SK-N-SH (cell line): ENCODE measurements at regions of chr11 and their contacts with region 1.

Region 1: DNA sequence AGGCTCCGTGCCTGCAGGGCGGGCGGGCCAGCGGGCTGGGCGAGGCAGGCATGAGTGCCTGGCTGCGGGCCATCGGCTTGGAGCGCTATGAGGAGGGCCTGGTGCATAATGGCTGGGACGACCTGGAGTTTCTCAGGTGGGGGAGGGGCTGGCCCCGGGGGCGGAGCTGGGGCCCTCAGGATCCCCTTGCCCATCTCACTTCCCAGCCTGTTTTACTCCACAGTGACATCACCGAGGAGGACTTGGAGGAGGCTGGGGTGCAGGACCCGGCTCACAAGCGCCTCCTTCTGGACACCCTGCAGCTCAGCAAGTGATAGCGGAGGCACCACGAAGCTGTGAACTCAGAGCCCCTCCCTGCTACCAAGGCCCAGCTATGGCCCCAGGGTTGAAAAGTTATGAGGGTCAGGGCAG is 5.9 kb downstream of the PHOX2A start:
- DNase-seq: peak; percentile 87
- H3K4me3 ChIP-seq: peak overlapping the region; percentile 30 to 83; a peak in 2 of 4 replicates
- H3K27ac ChIP-seq: peak overlapping the region; percentile 64 to 90
- H3K4me1 ChIP-seq: peaks cover 17 to 27% of the 10 kb centered on the region in 2 experiments; a peak in 2 of 4 replicates
- H3K27me3 ChIP-seq: no peaks in the 10 kb centered on the region
- CTCF ChIP-seq: peak; percentile 91
- EP300 ChIP-seq: no peak
- RAD21 ChIP-seq: peak; percentile 56

Region 2: GRCh38 chr11:72041442-72042385 is 196.3 kb before region 1 on chr11:
- CTCF ChIA-PET with region 1: no interaction called
- POLR2A ChIA-PET with region 1: no interaction called
- DNase-seq: peak; percentile 77
- H3K4me3 ChIP-seq: peak overlapping the region; percentile 64 to 67
- H3K27ac ChIP-seq: peak overlapping the region; percentile 97 to 99
- H3K4me1 ChIP-seq: peaks cover 18 to 43% of the 10 kb centered on the region in 2 experiments
- H3K27me3 ChIP-seq: no peaks in the 10 kb centered on the region
- CTCF ChIP-seq: no peak
- EP300 ChIP-seq: peak in 1 of 2 experiments; percentile 58; a peak in 2 of 4 replicates
- RAD21 ChIP-seq: peak; percentile 15; the same call in 1 of the 2 replicates

Region 3: GRCh38 chr11:72222907-72223614 is 15.0 kb before region 1 on chr11:
- CTCF ChIA-PET with region 1: interaction called, 37 read pairs
- POLR2A ChIA-PET with region 1: interaction called, 131 read pairs
- DNase-seq: peak; percentile 92
- H3K4me3 ChIP-seq: peak overlapping the region; percentile 96 to 100
- H3K27ac ChIP-seq: peak overlapping the region; percentile 90 to 91
- H3K4me1 ChIP-seq: peaks cover 5 to 31% of the 10 kb centered on the region in 2 experiments; a peak in 3 of 4 replicates
- H3K27me3 ChIP-seq: no peaks in the 10 kb centered on the region
- CTCF ChIP-seq: no peak
- EP300 ChIP-seq: peak in 1 of 2 experiments; percentile 41; a peak in 1 of 4 replicates
- RAD21 ChIP-seq: no peak

Region 4: GRCh38 chr11:72308226-72309073 is 70.4 kb after region 1 on chr11:
- CTCF ChIA-PET with region 1: interaction called, 12 read pairs
- POLR2A ChIA-PET with region 1: interaction called, 550 read pairs
- DNase-seq: peak; percentile 81
- H3K4me3 ChIP-seq: no peak overlapping the region; a peak in 1 of 4 replicates
- H3K27ac ChIP-seq: peak overlapping the region; percentile 96 to 100
- H3K4me1 ChIP-seq: peaks cover 31 to 76% of the 10 kb centered on the region in 2 experiments
- H3K27me3 ChIP-seq: no peaks in the 10 kb centered on the region
- CTCF ChIP-seq: no peak; the same call in 1 of the 2 replicates
- EP300 ChIP-seq: peak; percentile 93 to 99
- RAD21 ChIP-seq: peak; percentile 43

Region 5: DNA sequence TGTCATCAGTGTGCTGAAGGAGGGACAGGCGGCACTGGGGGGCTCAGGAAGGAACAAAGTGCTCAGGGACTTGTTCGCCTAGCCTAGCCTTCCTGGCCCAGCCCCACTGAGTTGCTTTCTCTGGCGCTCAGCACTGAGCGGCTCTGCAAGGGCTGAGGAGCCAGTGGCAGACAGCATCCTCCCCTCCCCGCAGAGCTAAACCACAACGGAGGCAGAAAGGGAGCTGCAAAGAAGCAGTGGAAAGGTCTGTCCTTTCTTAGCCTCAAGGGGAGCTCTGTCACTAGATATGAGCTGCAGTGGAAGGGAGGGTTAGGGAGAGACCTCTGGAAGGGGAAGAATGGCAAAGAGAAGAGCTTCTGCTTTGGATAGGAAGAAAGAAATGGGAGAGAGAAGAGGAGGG is 95.6 kb after region 1 on chr11:
- CTCF ChIA-PET with region 1: interaction called, 23 read pairs
- POLR2A ChIA-PET with region 1: interaction called, 81 read pairs
- DNase-seq: peak; percentile 61
- H3K4me3 ChIP-seq: no peak overlapping the region
- H3K27ac ChIP-seq: peak overlapping the region; percentile 35 to 99; a peak in 3 of 4 replicates
- H3K4me1 ChIP-seq: peaks cover 32 to 75% of the 10 kb centered on the region in 2 experiments
- H3K27me3 ChIP-seq: no peaks in the 10 kb centered on the region
- CTCF ChIP-seq: peak; percentile 52
- EP300 ChIP-seq: peak in 1 of 2 experiments; percentile 59; a peak in 1 of 4 replicates
- RAD21 ChIP-seq: peak; percentile 73

Region 6: GRCh38 chr11:72352859-72353551 is 115.0 kb after region 1 on chr11:
- CTCF ChIA-PET with region 1: interaction called, 314 read pairs
- POLR2A ChIA-PET with region 1: interaction called, 880 read pairs
- DNase-seq: peak; percentile 51
- H3K4me3 ChIP-seq: no peak overlapping the region
- H3K27ac ChIP-seq: peak overlapping the region; percentile 71 to 100
- H3K4me1 ChIP-seq: peaks cover 41 to 92% of the 10 kb centered on the region in 2 experiments
- H3K27me3 ChIP-seq: no peaks in the 10 kb centered on the region
- CTCF ChIP-seq: peak; percentile 77
- EP300 ChIP-seq: peak in 1 of 2 experiments; percentile 86; a peak in 2 of 4 replicates
- RAD21 ChIP-seq: peak; percentile 97